ENCODE measurements at regions of chr11 and their contacts with region 1.

Region 1: GRCh38 chr11:117210620-117211019 is 11.4 kb downstream of the TAGLN start:
- DNase-seq: no peak
- H3K4me3 ChIP-seq: no peak overlapping the region
- CTCF ChIP-seq: no peak

Region 2: DNA sequence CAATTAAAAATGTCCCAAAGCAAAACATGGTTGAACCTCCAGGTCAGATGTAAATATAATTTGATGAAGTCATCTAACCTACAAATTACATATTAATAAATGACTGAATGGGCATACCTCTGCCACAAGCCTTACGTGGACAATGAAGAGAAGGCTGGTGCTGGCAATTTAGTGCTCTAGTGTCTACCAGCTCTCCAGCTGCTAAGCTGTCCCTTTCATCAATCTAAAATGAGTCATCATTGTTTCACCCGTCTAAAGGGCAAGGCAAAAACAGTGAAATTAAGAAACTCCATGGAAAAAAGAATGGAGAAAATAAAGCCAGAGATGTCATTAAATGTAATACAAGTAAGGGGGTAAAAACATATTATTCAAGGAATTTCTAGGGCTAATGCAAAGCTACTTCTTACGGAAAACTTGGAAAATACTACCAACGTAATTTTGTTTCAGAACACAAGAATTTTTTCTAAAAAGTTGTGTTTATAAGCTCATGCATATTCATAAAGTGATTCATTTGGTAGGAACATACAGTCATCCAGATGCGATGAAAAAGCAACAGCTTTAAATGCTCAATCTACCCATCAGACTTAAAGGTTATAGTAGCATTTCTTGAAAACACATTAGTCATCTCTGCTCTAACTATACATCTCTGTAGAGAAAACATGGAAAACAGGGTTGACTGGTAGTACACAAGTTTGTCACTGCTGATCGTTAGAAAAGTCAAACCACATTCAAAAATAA is 183.9 kb before region 1 on chr11:
- CTCF ChIA-PET with region 1: no interaction called
- POLR2A ChIA-PET with region 1: no interaction called
- DNase-seq: peak; percentile 31
- H3K4me3 ChIP-seq: no peak overlapping the region
- CTCF ChIP-seq: no peak

Region 3: GRCh38 chr11:117199061-117199915 is 11.3 kb before region 1 on chr11 and contains the start of gene TAGLN:
- CTCF ChIA-PET with region 1: no interaction called
- POLR2A ChIA-PET with region 1: interaction called, 20 read pairs
- DNase-seq: peak; percentile 87
- H3K4me3 ChIP-seq: peak within 1 kb of the TSS; percentile 99
- CTCF ChIP-seq: no peak